PC-9 (cell line): ENCODE measurements at regions of chr5 and their contacts with region 1.

Region 1: DNA sequence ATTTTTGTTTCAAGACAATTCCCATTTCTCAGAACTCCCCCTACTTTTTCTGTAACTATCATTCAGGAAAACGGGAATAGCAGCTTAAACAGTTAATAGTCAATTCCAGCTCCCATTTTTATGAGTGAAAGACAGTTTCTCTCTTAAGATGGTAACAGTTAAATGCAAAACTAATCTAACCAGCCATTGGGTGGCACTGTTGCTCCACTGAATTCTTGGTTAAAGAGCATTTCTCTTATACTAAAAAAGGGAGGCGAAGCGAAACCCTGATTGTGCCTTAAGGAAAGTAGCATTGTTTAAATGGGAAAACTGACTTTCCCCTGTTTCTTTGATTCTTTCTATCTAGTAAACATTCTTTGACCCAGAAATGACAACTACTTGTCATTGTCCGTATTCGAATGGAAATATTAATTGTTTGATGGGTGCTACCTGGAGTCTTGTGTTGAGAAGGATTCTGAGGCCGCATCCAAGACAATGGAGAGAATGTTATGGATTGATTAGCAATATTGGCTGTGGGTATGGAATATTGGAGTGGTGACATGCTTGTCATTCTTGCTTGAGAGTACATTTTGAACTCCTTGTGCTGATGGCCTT is 507.8 kb downstream of the MAT2B start:
- DNase-seq: peak; percentile 29 to 39
- H3K4me3 ChIP-seq: no peak overlapping the region
- H3K27ac ChIP-seq: no peak overlapping the region
- H3K4me1 ChIP-seq: no peaks in the 10 kb centered on the region
- H3K27me3 ChIP-seq: no peaks in the 10 kb centered on the region
- CTCF ChIP-seq: peak; percentile 80

Region 2: GRCh38 chr5:163695830-163696578 is 317.2 kb before region 1 on chr5:
- CTCF ChIA-PET with region 1: no interaction called
- POLR2A ChIA-PET with region 1: no interaction called
- intact Hi-C with region 1: loop called (anchors 5 kb)
- DNase-seq: peak; percentile 19 to 43
- H3K4me3 ChIP-seq: no peak overlapping the region
- H3K27ac ChIP-seq: no peak overlapping the region
- H3K4me1 ChIP-seq: no peaks in the 10 kb centered on the region
- H3K27me3 ChIP-seq: peaks cover 11% of the 10 kb centered on the region; the same call in 1 of the 2 replicates
- CTCF ChIP-seq: peak; percentile 61

Region 3: DNA sequence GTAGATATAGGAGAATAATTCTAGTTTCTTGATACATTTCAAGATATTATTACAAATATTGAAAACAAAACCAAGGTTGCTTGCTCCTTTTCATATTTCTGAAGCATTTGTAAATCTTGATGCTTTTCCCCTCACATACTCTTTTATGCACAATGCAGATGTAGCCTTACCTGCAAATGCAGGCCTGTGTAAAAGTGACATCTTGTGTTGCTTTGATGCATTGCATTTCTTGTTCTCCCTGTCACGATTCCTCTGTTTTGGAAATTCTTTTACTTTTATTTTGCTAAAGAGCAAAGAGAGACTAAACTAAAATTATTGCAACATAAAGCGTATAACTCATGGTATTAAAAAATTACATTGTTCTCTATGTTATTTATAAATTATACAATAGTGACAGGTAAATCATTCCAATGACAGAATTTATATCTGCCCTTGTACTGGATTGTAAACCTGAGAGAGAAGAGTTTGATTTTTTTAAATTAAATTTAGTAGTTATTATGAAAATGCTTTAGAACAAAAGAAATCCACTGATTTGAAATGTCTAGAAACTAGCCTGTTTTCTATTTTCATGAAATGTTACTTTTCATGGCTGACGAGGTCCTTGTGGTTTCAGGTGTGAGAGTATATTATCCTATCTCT is 462.3 kb after region 1 on chr5:
- CTCF ChIA-PET with region 1: no interaction called
- POLR2A ChIA-PET with region 1: no interaction called
- intact Hi-C with region 1: loop called (anchors 1 kb)
- DNase-seq: no peak
- H3K4me3 ChIP-seq: no peak overlapping the region
- H3K27ac ChIP-seq: no peak overlapping the region
- H3K4me1 ChIP-seq: no peaks in the 10 kb centered on the region
- H3K27me3 ChIP-seq: no peaks in the 10 kb centered on the region
- CTCF ChIP-seq: peak; percentile 49; the same call in 1 of the 2 replicates

Region 4: DNA sequence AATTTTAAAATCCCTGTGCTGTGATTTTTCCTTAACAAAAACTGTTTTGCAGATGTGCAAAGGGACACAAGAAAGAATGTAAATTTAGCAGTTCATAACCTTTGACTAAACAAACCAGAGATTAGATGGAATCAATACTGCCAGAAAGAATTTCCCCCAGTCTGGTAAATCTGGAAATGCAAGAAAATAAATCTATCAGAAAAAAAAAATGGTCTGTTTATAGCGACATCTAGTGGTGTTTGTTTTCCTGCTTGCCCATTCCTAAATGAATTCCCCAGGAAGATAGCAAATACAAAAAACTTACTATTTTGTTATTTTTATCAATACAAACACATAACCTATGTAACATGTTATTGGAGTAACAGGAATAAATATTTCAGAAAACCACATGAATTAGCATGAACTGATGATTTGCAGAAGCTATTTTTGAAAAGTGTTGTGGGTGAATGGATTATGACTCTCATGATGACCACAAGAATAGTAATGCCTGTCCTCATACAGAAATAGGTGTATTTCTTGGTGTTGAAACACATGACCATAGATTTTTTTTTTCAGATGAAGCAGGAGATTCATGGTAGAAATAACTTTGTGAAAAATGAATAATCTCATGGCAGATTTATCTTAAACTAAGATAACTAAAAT is 1196.0 kb after region 1 on chr5:
- CTCF ChIA-PET with region 1: no interaction called
- POLR2A ChIA-PET with region 1: no interaction called
- intact Hi-C with region 1: loop called (anchors 1 kb)
- DNase-seq: no peak
- H3K4me3 ChIP-seq: no peak overlapping the region
- H3K27ac ChIP-seq: no peak overlapping the region
- H3K4me1 ChIP-seq: no peaks in the 10 kb centered on the region
- H3K27me3 ChIP-seq: no peaks in the 10 kb centered on the region
- CTCF ChIP-seq: peak; percentile 75